ENCODE measurements at regions of chr22 and their contacts with region 1.

Region 1: DNA sequence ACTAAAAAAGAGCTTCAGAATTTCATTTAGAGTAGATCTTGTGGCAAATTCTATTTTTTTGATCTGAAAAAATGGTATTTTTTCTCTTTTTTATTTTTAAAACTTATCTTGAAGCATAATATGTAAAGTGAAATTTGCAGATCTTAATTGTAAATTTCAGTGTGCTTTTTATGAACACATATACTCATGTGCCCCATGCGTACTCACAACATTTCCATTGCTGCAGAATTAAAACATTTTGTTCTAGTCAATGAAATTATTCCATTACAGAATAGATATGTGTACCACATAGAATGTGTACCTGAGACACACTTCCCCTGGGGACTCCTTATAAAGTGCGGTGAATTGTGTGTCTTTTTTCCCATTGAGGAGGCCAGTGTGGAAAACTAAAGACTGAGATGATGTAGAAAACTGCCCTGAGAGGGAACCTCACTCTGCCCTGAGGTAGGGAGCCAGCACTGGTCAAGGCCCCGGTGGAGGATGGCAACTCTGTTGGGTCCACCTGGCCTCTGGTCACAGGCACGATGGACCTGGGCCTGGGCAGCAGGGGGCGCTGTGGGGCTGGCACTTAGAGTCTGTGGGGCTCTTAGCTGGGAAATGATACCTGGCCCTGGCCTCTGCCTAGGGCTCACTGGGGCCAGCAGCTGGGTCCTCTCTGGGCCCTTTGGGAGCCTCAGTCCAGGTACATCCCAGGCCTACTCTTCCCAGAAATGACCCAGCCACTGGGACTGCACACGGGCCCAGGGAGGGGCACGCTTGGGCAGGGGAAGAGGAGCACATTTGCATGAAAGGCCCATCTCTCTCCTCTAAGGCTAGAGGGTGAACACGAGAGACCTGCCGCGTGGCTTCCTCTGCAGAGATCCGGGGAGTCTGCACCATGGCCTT is 77.9 kb upstream of the TOP3B start:
- DNase-seq: no peak
- ATAC-seq: peak; percentile 99
- H3K4me3 ChIP-seq: no peak overlapping the region
- H3K27ac ChIP-seq: peak overlapping the region; percentile 43; the same call in 1 of the 2 replicates
- H3K4me1 ChIP-seq: peaks cover 15% of the 10 kb centered on the region
- H3K27me3 ChIP-seq: no peaks in the 10 kb centered on the region
- CTCF ChIP-seq: peak; percentile 74 to 98 (median 81)
- EP300 ChIP-seq: no peak
- POLR2A ChIP-seq: no peak
- RAD21 ChIP-seq: peak; percentile 68

Region 2: GRCh38 chr22:21982338-21982965 is 78.0 kb before region 1 on chr22 and contains the start of gene TOP3B:
- CTCF ChIA-PET with region 1: interaction called, 12 read pairs
- POLR2A ChIA-PET with region 1: interaction called, 3 read pairs
- RAD21 ChIA-PET with region 1: interaction called, 3 read pairs
- SMC1A ChIA-PET with region 1: interaction called, 5 read pairs
- in situ Hi-C with region 1: no loop called
- intact Hi-C with region 1: no loop called
- DNase-seq: peak; percentile 17
- ATAC-seq: peak; percentile 93
- H3K4me3 ChIP-seq: peak within 1 kb of the TSS; percentile 79
- H3K27ac ChIP-seq: peak within 1 kb of the TSS; percentile 69
- H3K4me1 ChIP-seq: peaks cover 4% of the 10 kb centered on the region
- H3K27me3 ChIP-seq: no peaks in the 10 kb centered on the region
- CTCF ChIP-seq: no peak
- EP300 ChIP-seq: no peak
- POLR2A ChIP-seq: peak; percentile 92
- RAD21 ChIP-seq: peak; percentile 30; the same call in 1 of the 2 replicates
- polyA plus RNA-seq, gene TOP3B: 0.60 to 1.6 TPM

Region 3: DNA sequence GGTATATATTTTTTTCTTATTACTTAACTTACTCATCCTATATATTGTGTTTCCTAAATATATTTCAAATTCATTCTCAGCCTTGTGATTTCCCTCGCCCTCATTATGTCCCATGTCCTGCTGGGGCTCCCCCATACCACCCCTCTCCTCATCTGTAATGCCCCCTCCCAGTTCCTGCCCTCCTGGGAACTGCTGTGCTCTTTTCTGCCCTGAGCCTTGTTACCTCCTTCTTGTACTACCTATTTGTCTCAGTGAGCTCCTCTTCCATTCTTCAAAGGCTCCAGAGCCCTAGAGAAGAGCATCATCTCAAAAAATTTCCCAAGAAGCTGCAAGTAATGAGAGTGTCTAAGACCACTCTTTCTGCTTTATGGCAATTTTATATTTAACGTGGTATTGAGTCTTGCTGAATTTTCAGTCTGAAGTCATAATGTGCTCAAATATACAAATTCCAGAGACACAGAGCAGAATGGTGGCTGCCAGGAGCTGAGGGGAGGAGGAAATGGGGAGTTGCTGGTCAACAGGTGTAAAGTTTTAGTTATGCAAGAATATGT is 11.4 kb before region 1 on chr22:
- CTCF ChIA-PET with region 1: interaction called, 69 read pairs
- POLR2A ChIA-PET with region 1: interaction called, 24 read pairs
- RAD21 ChIA-PET with region 1: interaction called, 35 read pairs
- SMC1A ChIA-PET with region 1: interaction called, 52 read pairs
- in situ Hi-C with region 1: no loop called
- intact Hi-C with region 1: no loop called
- DNase-seq: no peak
- ATAC-seq: no peak
- H3K4me3 ChIP-seq: no peak overlapping the region
- H3K27ac ChIP-seq: no peak overlapping the region
- H3K4me1 ChIP-seq: peaks cover 3% of the 10 kb centered on the region; the same call in 1 of the 2 replicates
- H3K27me3 ChIP-seq: no peaks in the 10 kb centered on the region
- CTCF ChIP-seq: no peak
- EP300 ChIP-seq: no peak
- POLR2A ChIP-seq: no peak
- RAD21 ChIP-seq: no peak

Region 4: DNA sequence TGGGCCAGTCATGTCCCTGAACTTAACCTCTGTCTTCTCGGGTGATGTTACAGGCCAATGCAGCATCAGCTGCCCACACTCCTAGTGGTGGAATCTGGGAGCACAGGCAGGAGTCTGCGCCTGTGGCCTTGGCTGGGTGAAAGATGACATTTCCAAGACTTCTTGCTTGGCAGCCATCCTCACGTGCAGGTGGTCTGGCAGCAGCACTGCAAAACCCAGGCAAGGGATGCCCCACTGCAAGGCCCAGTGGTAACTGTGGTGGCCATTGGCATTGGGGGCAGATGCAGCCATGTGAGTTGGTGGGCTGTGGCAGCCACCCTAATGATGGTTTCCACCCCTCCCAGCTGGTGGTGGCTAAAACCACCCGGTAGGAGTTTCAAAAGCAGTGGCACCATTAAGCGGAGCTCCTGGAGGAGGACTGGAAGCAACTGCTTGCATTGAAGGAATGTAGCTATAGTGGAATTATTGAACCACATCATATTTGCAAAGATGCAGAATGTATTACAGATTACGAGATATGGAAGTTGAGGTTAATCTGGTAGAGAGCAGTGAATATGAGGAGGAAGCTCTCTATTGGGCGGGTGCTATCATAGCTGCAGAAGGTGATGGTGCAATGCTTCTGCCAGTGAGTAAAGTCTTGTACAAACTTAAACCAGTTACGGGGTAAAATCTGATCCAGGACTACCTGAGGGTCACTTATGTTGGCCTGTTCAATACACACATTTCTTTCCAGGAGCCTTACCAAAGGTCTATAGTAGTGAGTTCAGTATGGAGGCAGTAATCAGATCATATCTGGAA is 42.8 kb after region 1 on chr22:
- CTCF ChIA-PET with region 1: interaction called, 104 read pairs
- POLR2A ChIA-PET with region 1: interaction called, 4 read pairs
- RAD21 ChIA-PET with region 1: interaction called, 50 read pairs
- SMC1A ChIA-PET with region 1: interaction called, 70 read pairs
- in situ Hi-C with region 1: no loop called
- intact Hi-C with region 1: loop called (anchors 1 kb)
- DNase-seq: no peak
- ATAC-seq: 0 out of 3 replicates have a peak, but pooled peaks have one; percentile 18
- H3K4me3 ChIP-seq: no peak overlapping the region
- H3K27ac ChIP-seq: no peak overlapping the region
- H3K4me1 ChIP-seq: peaks cover 9% of the 10 kb centered on the region
- H3K27me3 ChIP-seq: no peaks in the 10 kb centered on the region
- CTCF ChIP-seq: peak; percentile 17 to 60 (median 30); a peak in 5 of 6 replicates
- EP300 ChIP-seq: no peak
- POLR2A ChIP-seq: no peak
- RAD21 ChIP-seq: no peak

Region 5: GRCh38 chr22:22138915-22139314 is 78.5 kb after region 1 on chr22:
- CTCF ChIA-PET with region 1: interaction called, 11 read pairs
- POLR2A ChIA-PET with region 1: interaction called, 4 read pairs
- RAD21 ChIA-PET with region 1: interaction called, 8 read pairs
- SMC1A ChIA-PET with region 1: interaction called, 11 read pairs
- in situ Hi-C with region 1: no loop called
- intact Hi-C with region 1: no loop called
- DNase-seq: no peak
- ATAC-seq: no peak
- H3K4me3 ChIP-seq: no peak overlapping the region
- H3K27ac ChIP-seq: no peak overlapping the region
- H3K4me1 ChIP-seq: no peaks in the 10 kb centered on the region
- H3K27me3 ChIP-seq: no peaks in the 10 kb centered on the region
- CTCF ChIP-seq: no peak
- EP300 ChIP-seq: no peak
- POLR2A ChIP-seq: no peak
- RAD21 ChIP-seq: no peak

Region 6: GRCh38 chr22:22195265-22196017 is 135.0 kb after region 1 on chr22:
- CTCF ChIA-PET with region 1: interaction called, 24 read pairs
- POLR2A ChIA-PET with region 1: no interaction called
- RAD21 ChIA-PET with region 1: interaction called, 7 read pairs
- SMC1A ChIA-PET with region 1: interaction called, 21 read pairs
- in situ Hi-C with region 1: no loop called
- intact Hi-C with region 1: no loop called
- DNase-seq: peak; percentile 91
- ATAC-seq: peak; percentile 94
- H3K4me3 ChIP-seq: peak overlapping the region; percentile 62; the same call in 1 of the 2 replicates
- H3K27ac ChIP-seq: peak overlapping the region; percentile 63
- H3K4me1 ChIP-seq: peaks cover 18% of the 10 kb centered on the region
- H3K27me3 ChIP-seq: no peaks in the 10 kb centered on the region
- CTCF ChIP-seq: peak; percentile 94 to 95 (median 94); a peak in 5 of 6 replicates
- EP300 ChIP-seq: peak in 1 of 2 experiments; percentile 64; a peak in 3 of 4 replicates
- POLR2A ChIP-seq: peak; percentile 56; the same call in 1 of the 2 replicates
- RAD21 ChIP-seq: peak; percentile 55

Measured in GM12878 (cell line).